Activated T-helper 2 cell treated with anti-CD3 and anti-CD28 coated beads, Interferon-gamma antibody, Interleukin-2, Interleukin-4, amounts not matched to agents 10 μg/mL and 5 μg/mL and 100 μg/mL, durations not matched to agents 14 hours and 24 hours and 36 hours (primary cell): ENCODE measurements at regions of chr5 and their contacts with region 1.

Region 1: GRCh38 chr5:39217365-39218281 is 1.7 kb downstream of the FYB1 start:
- DNase-seq: peak; percentile 66
- H3K4me3 Mint-ChIP-seq: peak overlapping the region; percentile 72
- H3K27ac Mint-ChIP-seq: peak overlapping the region; percentile 78
- H3K4me1 Mint-ChIP-seq: peaks cover 51% of the 10 kb centered on the region
- H3K27me3 Mint-ChIP-seq: no peaks in the 10 kb centered on the region

Region 2: GRCh38 chr5:39148983-39149534 is 68.6 kb before region 1 on chr5:
- intact Hi-C with region 1: loop called (anchors 1 kb)
- DNase-seq: no peak
- H3K4me3 Mint-ChIP-seq: no peak overlapping the region
- H3K27ac Mint-ChIP-seq: peak overlapping the region; percentile 52
- H3K4me1 Mint-ChIP-seq: peaks cover 42% of the 10 kb centered on the region
- H3K27me3 Mint-ChIP-seq: no peaks in the 10 kb centered on the region

Region 3: GRCh38 chr5:39231705-39232525 is 14.3 kb after region 1 on chr5:
- intact Hi-C with region 1: loop called (anchors 1 kb)
- DNase-seq: no peak
- H3K4me3 Mint-ChIP-seq: no peak overlapping the region
- H3K27ac Mint-ChIP-seq: peak overlapping the region; percentile 82
- H3K4me1 Mint-ChIP-seq: peaks cover 13% of the 10 kb centered on the region
- H3K27me3 Mint-ChIP-seq: no peaks in the 10 kb centered on the region

Region 4: GRCh38 chr5:39274398-39275085 is 56.9 kb after region 1 on chr5:
- intact Hi-C with region 1: loop called (anchors 2 kb)
- DNase-seq: no peak
- H3K4me3 Mint-ChIP-seq: peak overlapping the region; percentile 74
- H3K27ac Mint-ChIP-seq: peak overlapping the region; percentile 95
- H3K4me1 Mint-ChIP-seq: peaks cover 36% of the 10 kb centered on the region
- H3K27me3 Mint-ChIP-seq: no peaks in the 10 kb centered on the region

Region 5: DNA sequence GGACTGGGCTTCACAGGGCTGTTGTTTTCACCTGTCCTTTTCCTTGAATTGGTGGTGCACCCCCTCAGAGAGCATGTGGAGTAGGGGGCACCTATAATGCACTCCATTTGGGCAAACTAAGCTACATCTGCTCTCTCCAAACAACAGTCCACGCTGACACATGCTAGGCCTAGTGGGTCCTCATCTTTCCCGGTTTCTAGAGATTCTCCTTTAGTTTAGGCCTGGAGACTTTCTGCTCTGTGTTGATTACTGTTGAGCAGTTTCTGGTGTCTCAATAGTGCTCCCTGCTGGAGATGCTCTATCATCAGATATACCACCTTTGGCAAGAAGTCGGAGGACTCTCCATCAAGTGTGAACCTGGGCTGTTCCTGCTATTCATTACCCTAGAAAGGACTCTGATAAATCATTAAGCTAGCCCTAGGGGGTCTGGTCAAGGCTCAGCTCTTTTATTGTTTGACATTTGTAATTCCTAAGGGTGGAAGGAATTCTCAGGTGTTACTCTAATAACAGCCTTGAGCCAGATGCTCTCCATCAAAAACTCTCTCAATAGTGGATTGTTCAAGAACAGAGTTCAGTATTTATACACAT is 65.7 kb after region 1 on chr5:
- intact Hi-C with region 1: loop called (anchors 1 kb)
- DNase-seq: peak; percentile 43
- H3K4me3 Mint-ChIP-seq: no peak overlapping the region
- H3K27ac Mint-ChIP-seq: peak overlapping the region; percentile 28
- H3K4me1 Mint-ChIP-seq: peaks cover 12% of the 10 kb centered on the region
- H3K27me3 Mint-ChIP-seq: peaks cover 27% of the 10 kb centered on the region

Region 6: DNA sequence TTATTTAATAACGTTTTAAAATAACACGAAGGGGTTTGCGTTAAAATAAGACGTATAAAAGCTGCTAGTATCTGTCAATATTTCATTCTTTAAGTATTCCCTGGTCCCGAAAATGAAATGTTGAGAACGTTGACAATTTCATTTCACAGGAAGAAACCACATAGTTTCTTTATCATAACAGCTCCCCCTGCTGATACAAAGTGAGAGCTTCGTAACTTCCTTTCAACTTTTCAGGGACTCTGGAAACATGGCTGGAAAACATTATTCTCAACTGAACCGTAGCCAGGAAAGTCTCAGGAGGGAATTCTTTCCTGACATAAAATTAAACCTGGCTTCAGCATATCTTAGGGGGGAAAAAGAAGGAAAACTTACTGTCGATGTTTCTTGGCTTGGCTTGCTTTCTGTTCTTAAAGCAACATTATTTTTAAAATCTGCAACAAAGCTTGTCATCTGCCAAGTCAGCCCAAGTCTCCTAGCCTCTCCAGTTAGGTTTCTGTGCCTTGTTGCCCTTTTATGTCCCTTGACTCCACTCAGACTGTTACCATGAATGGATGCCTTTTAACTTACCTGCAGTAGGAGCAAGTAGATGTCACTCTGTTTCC is 330.0 kb after region 1 on chr5:
- intact Hi-C with region 1: loop called (anchors 5 kb)
- DNase-seq: no peak
- H3K4me3 Mint-ChIP-seq: no peak overlapping the region
- H3K27ac Mint-ChIP-seq: no peak overlapping the region
- H3K4me1 Mint-ChIP-seq: peaks cover 4% of the 10 kb centered on the region
- H3K27me3 Mint-ChIP-seq: peaks cover 2% of the 10 kb centered on the region

Region 7: GRCh38 chr5:40404613-40405012 is 1187.0 kb after region 1 on chr5:
- intact Hi-C with region 1: loop called (anchors 10 kb)
- DNase-seq: no peak
- H3K4me3 Mint-ChIP-seq: peak overlapping the region; percentile 37
- H3K27ac Mint-ChIP-seq: peak overlapping the region; percentile 84
- H3K4me1 Mint-ChIP-seq: peaks cover 77% of the 10 kb centered on the region
- H3K27me3 Mint-ChIP-seq: no peaks in the 10 kb centered on the region